Mammary epithelial cell (primary cell): ENCODE measurements at regions of chr17 and their contacts with region 1.

Region 1: DNA sequence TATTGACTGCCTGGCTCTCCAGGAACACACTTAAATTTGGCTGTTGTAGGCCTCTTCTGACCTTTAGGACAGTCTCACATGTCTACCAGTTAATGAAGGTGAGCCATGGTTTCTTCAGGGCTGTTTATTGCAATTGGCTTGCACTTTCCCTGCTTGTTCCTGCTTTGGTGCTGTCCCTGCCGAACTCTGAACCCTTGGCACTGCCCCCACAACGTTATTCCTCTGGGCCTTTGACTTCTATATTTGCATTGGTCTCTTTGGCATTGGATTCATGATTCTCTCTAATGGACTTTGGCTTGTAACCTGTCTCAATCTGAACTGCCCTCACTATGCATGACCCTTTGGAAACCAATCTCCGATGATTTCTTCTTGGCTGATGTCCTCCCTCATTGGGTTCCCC is 299.4 kb downstream of the UTP18 start:
- DNase-seq: no peak
- H3K4me3 ChIP-seq: no peak overlapping the region
- H3K27ac ChIP-seq: no peak overlapping the region
- H3K4me1 ChIP-seq: no peaks in the 10 kb centered on the region
- H3K27me3 ChIP-seq: no peaks in the 10 kb centered on the region
- CTCF ChIP-seq: no peak

Region 2: DNA sequence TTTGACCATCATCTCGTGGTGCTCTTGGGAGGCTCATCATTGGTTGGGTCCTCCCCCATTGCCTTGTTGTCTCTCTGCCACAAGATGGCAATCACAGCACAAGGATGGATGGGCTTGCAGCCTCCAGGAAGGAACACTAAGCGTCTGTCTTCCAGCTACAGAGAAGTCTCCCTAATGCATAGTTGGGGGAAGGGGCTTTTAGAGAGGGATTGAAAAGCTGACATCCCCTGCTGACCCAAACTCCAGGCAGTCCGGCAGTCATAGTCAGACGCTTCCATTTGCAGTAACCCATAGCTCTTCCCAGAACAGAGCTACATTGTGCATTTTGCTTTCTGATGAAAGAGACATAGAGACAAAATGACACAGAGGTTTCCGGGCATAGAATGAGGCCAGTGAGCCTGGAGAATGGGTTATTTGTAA is 188.0 kb before region 1 on chr17:
- CTCF ChIA-PET with region 1: interaction called, 10 read pairs
- dilution Hi-C with region 1: no loop called
- in situ Hi-C with region 1: no loop called
- intact Hi-C with region 1: no loop called
- DNase-seq: peak; percentile 47
- H3K4me3 ChIP-seq: no peak overlapping the region
- H3K27ac ChIP-seq: no peak overlapping the region
- H3K4me1 ChIP-seq: no peaks in the 10 kb centered on the region
- H3K27me3 ChIP-seq: no peaks in the 10 kb centered on the region
- CTCF ChIP-seq: peak; percentile 77 to 87

Region 3: DNA sequence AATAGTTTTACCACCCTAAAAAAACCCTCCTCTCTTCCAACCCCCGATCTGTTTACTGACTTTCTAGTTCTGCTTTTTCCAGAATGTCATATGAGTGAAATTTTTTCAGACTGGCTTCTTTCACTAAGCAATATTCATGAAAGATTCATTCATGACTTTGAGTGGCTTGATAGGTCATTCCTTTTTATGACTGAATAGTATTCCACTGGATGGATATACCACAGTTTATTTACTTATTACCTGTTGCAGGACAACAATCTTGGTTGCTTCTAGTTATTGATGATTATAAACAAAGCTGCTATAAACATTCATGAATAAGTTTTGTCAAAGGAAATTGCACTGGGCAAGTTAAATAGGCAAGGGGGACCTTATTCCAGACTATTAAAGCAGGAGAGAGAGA is 35.3 kb before region 1 on chr17:
- CTCF ChIA-PET with region 1: no interaction called
- dilution Hi-C with region 1: no loop called
- in situ Hi-C with region 1: no loop called
- intact Hi-C with region 1: loop called (anchors 2 kb)
- DNase-seq: no peak
- H3K4me3 ChIP-seq: no peak overlapping the region
- H3K27ac ChIP-seq: no peak overlapping the region
- H3K4me1 ChIP-seq: no peaks in the 10 kb centered on the region
- H3K27me3 ChIP-seq: peaks cover 3% of the 10 kb centered on the region
- CTCF ChIP-seq: no peak